T-cell (primary cell): ENCODE measurements at regions of chr12 and their contacts with region 1.

Region 1: DNA sequence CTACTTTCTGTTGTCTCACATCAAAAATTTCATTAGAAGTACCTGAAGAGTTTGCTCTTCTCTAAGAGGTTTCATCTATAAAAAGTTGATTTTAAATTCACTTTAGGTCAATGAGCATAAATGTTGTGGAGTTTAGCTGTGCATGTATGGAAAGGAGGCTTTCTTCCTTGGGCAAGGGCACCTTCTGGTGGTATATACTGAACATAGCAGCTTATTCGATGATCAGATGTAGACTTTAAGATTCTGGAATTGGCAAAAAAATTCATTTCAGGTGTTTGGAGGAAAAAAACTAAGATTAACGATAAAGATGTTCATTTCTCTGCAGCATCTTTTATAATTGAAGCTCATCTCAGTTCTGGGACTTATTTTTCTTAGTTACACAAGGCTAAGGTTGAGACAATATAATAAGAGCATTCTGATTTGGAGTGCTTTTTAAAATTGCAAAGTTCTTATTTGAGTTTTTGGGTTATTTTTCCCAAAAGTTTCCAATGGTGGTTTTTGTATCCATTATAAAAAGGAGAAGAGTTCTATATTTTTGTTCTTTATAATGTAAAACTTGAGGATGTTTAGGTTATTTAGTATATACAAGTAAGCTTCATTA is 46.8 kb downstream of the TMEM117 start:
- DNase-seq: peak in 26 of 35 experiments; percentile 2 to 74 (median 16)
- ATAC-seq: peak; percentile 70 to 77 (median 74)
- H3K4me3 ChIP-seq: no peak overlapping the region
- H3K4me3 Mint-ChIP-seq: no peak overlapping the region
- H3K27ac ChIP-seq: no peak overlapping the region
- H3K27ac Mint-ChIP-seq: no peak overlapping the region
- H3K4me1 ChIP-seq: no peaks in the 10 kb centered on the region
- H3K4me1 Mint-ChIP-seq: no peaks in the 10 kb centered on the region
- H3K27me3 ChIP-seq: no peaks in the 10 kb centered on the region
- H3K27me3 Mint-ChIP-seq: no peaks in the 10 kb centered on the region

Region 2: GRCh38 chr12:43444940-43445564 is 437.6 kb before region 1 on chr12:
- CTCF ChIA-PET with region 1: interaction called, 13 to 17 read pairs
- POLR2A ChIA-PET with region 1: no interaction called
- DNase-seq: peak in 29 of 35 experiments; percentile 3 to 58 (median 23)
- ATAC-seq: no peak
- H3K4me3 ChIP-seq: no peak overlapping the region
- H3K4me3 Mint-ChIP-seq: no peak overlapping the region
- H3K27ac ChIP-seq: no peak overlapping the region
- H3K27ac Mint-ChIP-seq: no peak overlapping the region
- H3K4me1 ChIP-seq: no peaks in the 10 kb centered on the region
- H3K4me1 Mint-ChIP-seq: no peaks in the 10 kb centered on the region
- H3K27me3 ChIP-seq: no peaks in the 10 kb centered on the region
- H3K27me3 Mint-ChIP-seq: peaks cover 0 to 9% of the 10 kb centered on the region in 2 donors

Region 3: DNA sequence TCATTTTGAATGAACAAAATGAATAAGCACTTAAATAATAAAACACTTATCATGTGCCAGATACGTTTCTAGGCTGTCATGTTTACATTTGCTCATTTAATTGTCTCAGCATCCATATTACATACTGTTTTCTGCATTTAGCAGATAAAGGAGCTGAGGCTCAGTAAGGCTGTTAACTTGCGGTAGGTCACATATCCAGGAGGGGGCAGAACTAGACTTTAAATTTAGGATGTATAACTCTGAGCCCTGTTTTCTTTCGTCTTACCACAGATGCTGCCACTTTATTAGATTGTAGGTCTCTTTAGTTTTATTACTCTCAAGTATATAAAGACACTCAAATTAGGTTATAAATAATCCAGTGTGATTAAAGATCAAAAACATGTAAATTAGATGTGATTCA is 106.2 kb before region 1 on chr12:
- CTCF ChIA-PET with region 1: interaction called, 12 to 84 read pairs
- POLR2A ChIA-PET with region 1: no interaction called
- DNase-seq: peak in 19 of 35 experiments; percentile 2 to 58 (median 15)
- ATAC-seq: peak; percentile 31 to 73 (median 60)
- H3K4me3 ChIP-seq: no peak overlapping the region
- H3K4me3 Mint-ChIP-seq: no peak overlapping the region
- H3K27ac ChIP-seq: no peak overlapping the region
- H3K27ac Mint-ChIP-seq: no peak overlapping the region
- H3K4me1 ChIP-seq: no peaks in the 10 kb centered on the region
- H3K4me1 Mint-ChIP-seq: peaks cover 4 to 7% (median 7%) of the 10 kb centered on the region in 3 donors
- H3K27me3 ChIP-seq: no peaks in the 10 kb centered on the region
- H3K27me3 Mint-ChIP-seq: no peaks in the 10 kb centered on the region

Region 4: DNA sequence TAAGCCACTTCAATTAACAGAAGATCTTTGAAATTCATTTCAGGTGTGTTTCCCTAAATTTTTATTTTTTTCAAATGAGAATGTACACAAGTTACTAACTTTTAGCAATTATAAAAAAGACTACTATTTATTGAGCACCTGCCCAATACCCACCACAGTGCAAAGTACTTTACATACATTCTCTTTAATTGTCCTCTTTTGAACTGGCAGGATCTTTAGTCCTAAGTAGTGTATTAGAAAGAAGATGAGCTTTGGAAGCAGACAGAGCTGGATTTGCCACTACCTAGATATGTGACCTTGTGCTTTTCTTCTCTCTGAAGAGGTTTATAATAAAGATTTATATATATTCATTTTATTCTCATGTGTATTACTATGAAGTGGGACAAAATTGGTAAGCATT is 16.9 kb after region 1 on chr12:
- CTCF ChIA-PET with region 1: no interaction called
- POLR2A ChIA-PET with region 1: no interaction called
- DNase-seq: no peak
- ATAC-seq: no peak
- H3K4me3 ChIP-seq: no peak overlapping the region
- H3K4me3 Mint-ChIP-seq: no peak overlapping the region
- H3K27ac ChIP-seq: no peak overlapping the region
- H3K27ac Mint-ChIP-seq: no peak overlapping the region
- H3K4me1 ChIP-seq: no peaks in the 10 kb centered on the region
- H3K4me1 Mint-ChIP-seq: peaks cover 0 to 6% (median 0%) of the 10 kb centered on the region in 3 donors
- H3K27me3 ChIP-seq: no peaks in the 10 kb centered on the region
- H3K27me3 Mint-ChIP-seq: peaks cover 0 to 7% of the 10 kb centered on the region in 2 donors